CD8-positive, alpha-beta memory T cell (primary cell): ENCODE measurements at regions of chr5 and their contacts with region 1.

Region 1: GRCh38 chr5:42908509-42909488 is 97.1 kb upstream of the SELENOP start:
- DNase-seq: peak; percentile 82 to 95 (median 88)
- H3K4me3 ChIP-seq: peak overlapping the region; percentile 78
- H3K4me3 Mint-ChIP-seq: peak overlapping the region; percentile 78 to 98 (median 94)
- H3K27ac ChIP-seq: no peak overlapping the region
- H3K27ac Mint-ChIP-seq: peak overlapping the region; percentile 65 to 98 (median 94)
- H3K4me1 ChIP-seq: peaks cover 10% of the 10 kb centered on the region
- H3K4me1 Mint-ChIP-seq: peaks cover 15 to 19% (median 16%) of the 10 kb centered on the region in 3 donors
- H3K27me3 ChIP-seq: peaks cover 6% of the 10 kb centered on the region
- H3K27me3 Mint-ChIP-seq: peaks cover 8 to 15% of the 10 kb centered on the region in 2 donors

Region 2: DNA sequence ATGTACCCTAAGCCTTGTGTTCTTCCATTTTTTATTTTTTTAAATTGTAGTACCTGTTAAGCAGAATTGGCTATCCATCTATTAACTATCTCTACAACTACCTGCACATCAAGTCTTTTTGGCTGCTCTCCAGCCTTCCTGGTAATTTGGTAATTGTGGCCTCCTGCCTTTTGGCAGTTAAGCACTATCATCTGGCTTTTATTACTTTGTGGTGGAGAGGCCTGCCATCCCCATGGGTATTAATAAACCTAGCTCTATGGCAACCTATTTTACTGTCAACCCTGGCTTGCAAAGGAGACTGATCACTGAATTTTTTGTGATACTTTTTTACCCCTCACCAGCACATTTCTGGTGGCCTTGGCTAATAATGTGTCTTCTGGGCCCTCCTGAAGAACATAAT is 117.6 kb before region 1 on chr5:
- CTCF ChIA-PET with region 1: no interaction called
- POLR2A ChIA-PET with region 1: no interaction called
- DNase-seq: no peak
- H3K4me3 ChIP-seq: no peak overlapping the region
- H3K4me3 Mint-ChIP-seq: no peak overlapping the region
- H3K27ac ChIP-seq: no peak overlapping the region
- H3K27ac Mint-ChIP-seq: no peak overlapping the region
- H3K4me1 ChIP-seq: no peaks in the 10 kb centered on the region
- H3K4me1 Mint-ChIP-seq: no peaks in the 10 kb centered on the region
- H3K27me3 ChIP-seq: no peaks in the 10 kb centered on the region
- H3K27me3 Mint-ChIP-seq: peaks cover 5 to 10% of the 10 kb centered on the region in 2 donors

Region 3: DNA sequence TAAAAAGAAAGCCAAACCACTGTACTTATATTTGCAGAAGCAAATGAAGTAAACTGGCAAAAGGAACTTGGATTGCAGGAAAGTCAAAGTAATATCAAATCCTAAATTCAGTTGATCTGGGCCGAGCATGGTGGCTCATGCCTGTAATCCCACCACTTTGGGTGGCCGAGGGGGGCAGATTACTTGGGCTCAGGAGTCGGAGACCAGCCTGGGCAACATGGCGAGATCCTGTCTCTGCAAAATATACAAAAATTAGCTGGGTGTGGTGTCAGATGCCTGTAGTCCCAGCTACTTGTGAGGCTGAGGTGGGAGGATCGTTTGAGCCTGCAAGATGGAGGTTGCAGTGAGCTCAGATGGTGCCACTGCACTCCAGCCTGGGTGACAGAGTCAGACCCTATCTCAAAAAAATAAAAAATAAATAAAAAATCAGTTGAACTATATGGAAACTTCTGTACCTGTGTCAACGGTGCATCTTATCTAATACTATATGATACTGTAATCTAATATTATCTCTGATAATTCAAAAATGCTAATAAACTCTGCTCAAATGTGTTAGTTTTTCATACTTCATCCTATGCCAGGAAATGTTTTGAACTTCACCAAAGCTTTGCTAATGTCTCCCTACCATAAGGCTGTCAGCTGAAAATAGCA is 107.2 kb before region 1 on chr5:
- CTCF ChIA-PET with region 1: no interaction called
- POLR2A ChIA-PET with region 1: no interaction called
- DNase-seq: no peak
- H3K4me3 ChIP-seq: no peak overlapping the region
- H3K4me3 Mint-ChIP-seq: no peak overlapping the region
- H3K27ac ChIP-seq: no peak overlapping the region
- H3K27ac Mint-ChIP-seq: no peak overlapping the region
- H3K4me1 ChIP-seq: no peaks in the 10 kb centered on the region
- H3K4me1 Mint-ChIP-seq: no peaks in the 10 kb centered on the region
- H3K27me3 ChIP-seq: no peaks in the 10 kb centered on the region
- H3K27me3 Mint-ChIP-seq: peaks cover 0 to 2% of the 10 kb centered on the region in 2 donors

Region 4: GRCh38 chr5:42950440-42951292 is 41.9 kb after region 1 on chr5:
- CTCF ChIA-PET with region 1: interaction called, 37 read pairs
- POLR2A ChIA-PET with region 1: interaction called, 17 read pairs
- DNase-seq: peak; percentile 43 to 81 (median 61)
- H3K4me3 ChIP-seq: peak overlapping the region; percentile 97
- H3K4me3 Mint-ChIP-seq: peak overlapping the region; percentile 91 to 98 (median 95)
- H3K27ac ChIP-seq: peak overlapping the region; percentile 98
- H3K27ac Mint-ChIP-seq: peak overlapping the region; percentile 99 to 100 (median 100)
- H3K4me1 ChIP-seq: peaks cover 27% of the 10 kb centered on the region
- H3K4me1 Mint-ChIP-seq: peaks cover 29 to 50% (median 39%) of the 10 kb centered on the region in 3 donors
- H3K27me3 ChIP-seq: no peaks in the 10 kb centered on the region
- H3K27me3 Mint-ChIP-seq: peaks cover 0 to 16% of the 10 kb centered on the region in 2 donors

Region 5: GRCh38 chr5:42970636-42971559 is 62.1 kb after region 1 on chr5:
- CTCF ChIA-PET with region 1: interaction called, 16 read pairs
- POLR2A ChIA-PET with region 1: no interaction called
- DNase-seq: no peak
- H3K4me3 ChIP-seq: no peak overlapping the region
- H3K4me3 Mint-ChIP-seq: no peak overlapping the region
- H3K27ac ChIP-seq: no peak overlapping the region
- H3K27ac Mint-ChIP-seq: peak overlapping the region in 2 of 8 donors; percentile 43 to 44
- H3K4me1 ChIP-seq: no peaks in the 10 kb centered on the region
- H3K4me1 Mint-ChIP-seq: peaks cover 7 to 8% (median 8%) of the 10 kb centered on the region in 3 donors
- H3K27me3 ChIP-seq: no peaks in the 10 kb centered on the region
- H3K27me3 Mint-ChIP-seq: no peaks in the 10 kb centered on the region

Region 6: GRCh38 chr5:42994246-42995151 is 85.7 kb after region 1 on chr5:
- CTCF ChIA-PET with region 1: interaction called, 80 read pairs
- POLR2A ChIA-PET with region 1: interaction called, 40 read pairs
- DNase-seq: peak; percentile 74 to 91 (median 84)
- H3K4me3 ChIP-seq: peak overlapping the region; percentile 97
- H3K4me3 Mint-ChIP-seq: peak overlapping the region; percentile 94 to 100 (median 99)
- H3K27ac ChIP-seq: peak overlapping the region; percentile 97
- H3K27ac Mint-ChIP-seq: peak overlapping the region; percentile 97 to 100 (median 100)
- H3K4me1 ChIP-seq: peaks cover 29% of the 10 kb centered on the region
- H3K4me1 Mint-ChIP-seq: peaks cover 31 to 35% (median 35%) of the 10 kb centered on the region in 3 donors
- H3K27me3 ChIP-seq: no peaks in the 10 kb centered on the region
- H3K27me3 Mint-ChIP-seq: peaks cover 0 to 13% of the 10 kb centered on the region in 2 donors

Region 7: GRCh38 chr5:43019614-43020293 is 111.0 kb after region 1 on chr5:
- CTCF ChIA-PET with region 1: interaction called, 22 read pairs
- POLR2A ChIA-PET with region 1: interaction called, 18 read pairs
- DNase-seq: peak; percentile 75 to 93 (median 87)
- H3K4me3 ChIP-seq: peak overlapping the region; percentile 87
- H3K4me3 Mint-ChIP-seq: peak overlapping the region; percentile 97 to 100 (median 99)
- H3K27ac ChIP-seq: peak overlapping the region; percentile 96
- H3K27ac Mint-ChIP-seq: peak overlapping the region; percentile 98 to 100 (median 100)
- H3K4me1 ChIP-seq: peaks cover 36% of the 10 kb centered on the region
- H3K4me1 Mint-ChIP-seq: peaks cover 40 to 56% (median 54%) of the 10 kb centered on the region in 3 donors
- H3K27me3 ChIP-seq: no peaks in the 10 kb centered on the region
- H3K27me3 Mint-ChIP-seq: peaks cover 0 to 8% of the 10 kb centered on the region in 2 donors

Region 8: GRCh38 chr5:43066799-43067741 is 158.3 kb after region 1 on chr5:
- CTCF ChIA-PET with region 1: interaction called, 14 read pairs
- POLR2A ChIA-PET with region 1: interaction called, 19 read pairs
- DNase-seq: peak; percentile 75 to 92 (median 87)
- H3K4me3 ChIP-seq: peak overlapping the region; percentile 99
- H3K4me3 Mint-ChIP-seq: peak overlapping the region; percentile 91 to 99 (median 98)
- H3K27ac ChIP-seq: peak overlapping the region; percentile 99
- H3K27ac Mint-ChIP-seq: peak overlapping the region; percentile 96 to 100 (median 99)
- H3K4me1 ChIP-seq: peaks cover 31% of the 10 kb centered on the region
- H3K4me1 Mint-ChIP-seq: peaks cover 42 to 59% (median 52%) of the 10 kb centered on the region in 3 donors
- H3K27me3 ChIP-seq: no peaks in the 10 kb centered on the region
- H3K27me3 Mint-ChIP-seq: no peaks in the 10 kb centered on the region

Region 9: DNA sequence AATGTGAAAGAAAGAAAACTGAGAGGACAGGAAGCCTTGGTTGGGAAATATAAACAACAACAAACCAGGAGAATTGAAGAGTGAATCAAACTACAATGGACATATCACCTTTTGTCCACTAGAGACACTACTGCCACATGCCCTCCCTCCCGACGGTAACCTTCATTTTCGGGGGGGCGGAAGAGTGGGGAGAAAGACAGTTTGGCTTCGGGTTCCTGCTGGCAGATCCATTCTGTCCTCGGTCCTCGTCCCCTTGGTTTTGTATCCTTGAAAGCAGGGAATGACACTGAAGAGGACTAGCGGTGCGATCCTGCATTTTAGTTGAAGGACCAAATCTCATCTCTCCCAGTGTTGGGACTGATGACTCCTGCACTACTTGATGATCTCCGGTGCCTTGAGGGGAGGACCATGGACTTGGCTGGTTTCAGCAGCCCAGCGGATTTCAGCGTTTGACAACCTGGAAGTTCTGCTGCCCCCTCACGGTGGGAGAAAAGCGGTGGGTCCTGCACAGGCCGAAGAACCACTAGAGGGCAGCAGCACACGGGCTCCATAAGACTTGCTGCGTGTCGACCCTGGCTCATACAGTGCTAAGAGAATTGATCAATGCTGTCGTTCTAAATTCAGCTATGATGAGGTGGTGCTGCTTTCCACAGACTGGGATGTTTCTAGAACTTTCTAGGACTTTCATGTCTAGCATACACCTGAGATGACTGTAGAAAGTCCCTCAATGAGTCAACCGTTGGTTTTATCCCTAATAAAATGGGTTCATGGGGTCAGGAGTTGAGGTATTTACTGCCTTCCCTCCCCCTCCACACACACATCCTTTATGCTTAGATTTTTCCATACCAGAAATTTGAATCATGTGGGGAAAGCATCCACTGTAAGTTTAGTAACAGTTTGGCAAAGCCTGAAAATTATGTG is 196.8 kb after region 1 on chr5:
- CTCF ChIA-PET with region 1: interaction called, 34 read pairs
- POLR2A ChIA-PET with region 1: no interaction called
- DNase-seq: peak; percentile 80 to 92 (median 84)
- H3K4me3 ChIP-seq: peak overlapping the region; percentile 74
- H3K4me3 Mint-ChIP-seq: peak overlapping the region; percentile 77 to 91 (median 85)
- H3K27ac ChIP-seq: peak overlapping the region; percentile 19
- H3K27ac Mint-ChIP-seq: peak overlapping the region; percentile 72 to 95 (median 90)
- H3K4me1 ChIP-seq: peaks cover 21% of the 10 kb centered on the region
- H3K4me1 Mint-ChIP-seq: peaks cover 33 to 45% (median 44%) of the 10 kb centered on the region in 3 donors
- H3K27me3 ChIP-seq: no peaks in the 10 kb centered on the region
- H3K27me3 Mint-ChIP-seq: no peaks in the 10 kb centered on the region